Heart right ventricle (tissue), 16 donors: ENCODE measurements at regions of chr16 and their contacts with region 1.

Region 1: DNA sequence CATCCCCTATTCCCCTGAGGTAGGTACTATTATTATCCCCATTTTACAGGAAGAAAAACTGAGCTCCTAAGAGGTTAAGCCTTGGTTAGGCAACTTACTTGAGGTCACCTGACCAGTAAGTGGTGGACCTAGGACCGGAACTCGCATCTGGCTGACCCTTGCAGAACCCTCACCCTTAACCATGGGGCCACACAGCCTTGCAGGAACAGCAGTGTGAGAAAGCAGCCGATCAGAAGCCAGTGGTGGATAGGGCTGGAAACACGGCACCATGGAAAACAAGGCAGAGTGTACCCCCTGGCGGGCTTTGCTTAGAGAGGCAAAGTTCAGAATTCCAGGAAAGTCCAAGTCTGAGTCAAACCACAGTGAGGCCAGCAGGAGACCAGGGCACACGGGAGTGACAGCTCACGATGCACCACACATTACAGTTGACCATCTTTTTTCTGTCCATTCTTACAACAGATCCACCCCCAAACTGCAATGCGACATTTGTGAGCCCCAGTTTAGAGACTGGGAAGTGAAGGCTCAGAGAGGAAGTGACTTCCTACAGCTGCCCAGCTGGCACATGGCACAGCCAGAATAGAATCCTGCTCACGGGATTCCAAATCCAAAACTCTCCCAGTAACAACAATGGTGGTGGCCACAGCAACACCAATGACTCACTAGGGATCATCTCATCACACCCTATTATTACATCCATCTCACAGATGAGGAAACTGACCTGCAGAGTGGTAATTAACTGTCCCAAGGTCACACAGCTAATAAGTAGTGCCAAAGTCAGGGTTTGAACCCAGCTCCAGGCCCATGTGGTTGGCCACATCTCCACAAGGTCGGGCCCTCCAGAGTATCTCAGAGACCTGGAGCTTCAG is 20.3 kb downstream of the KIFC3 start:
- DNase-seq: no peak
- ATAC-seq: no peak
- H3K4me3 ChIP-seq: no peak overlapping the region
- H3K27ac ChIP-seq: no peak overlapping the region
- H3K4me1 ChIP-seq: peaks cover 2 to 15% (median 11%) of the 10 kb centered on the region in 9 donors
- H3K27me3 ChIP-seq: no peaks in the 10 kb centered on the region
- CTCF ChIP-seq: no peak

Region 2: GRCh38 chr16:57741660-57742191 is 40.2 kb before region 1 on chr16:
- intact Hi-C with region 1: loop called in 1 of 10 experiments (anchors 5 kb)
- DNase-seq: no peak
- ATAC-seq: peak in 6 of 8 donors; percentile 47 to 79 (median 68)
- H3K4me3 ChIP-seq: no peak overlapping the region
- H3K27ac ChIP-seq: no peak overlapping the region
- H3K4me1 ChIP-seq: peaks cover 0 to 20% (median 9%) of the 10 kb centered on the region in 9 donors
- H3K27me3 ChIP-seq: no peaks in the 10 kb centered on the region
- CTCF ChIP-seq: no peak

Region 3: GRCh38 chr16:57816334-57816745 is 34.4 kb after region 1 on chr16:
- intact Hi-C with region 1: no loop called
- DNase-seq: peak; percentile 83 to 90
- ATAC-seq: peak; percentile 94 to 97 (median 97)
- H3K4me3 ChIP-seq: no peak overlapping the region
- H3K27ac ChIP-seq: peak overlapping the region; percentile 47 to 91 (median 84)
- H3K4me1 ChIP-seq: peaks cover 7 to 24% (median 20%) of the 10 kb centered on the region in 9 donors
- H3K27me3 ChIP-seq: no peaks in the 10 kb centered on the region
- CTCF ChIP-seq: peak in 2 of 9 donors; percentile 7 to 10